Aorta (tissue), 5 donors: ENCODE measurements at regions of chr6 and their contacts with region 1.

Region 1: GRCh38 chr6:36893976-36894932 is 8.5 kb downstream of the C6orf89 start:
- DNase-seq: no peak
- ATAC-seq: no peak
- H3K4me3 ChIP-seq: no peak overlapping the region
- H3K27ac ChIP-seq: no peak overlapping the region
- H3K4me1 ChIP-seq: no peaks in the 10 kb centered on the region
- H3K27me3 ChIP-seq: no peaks in the 10 kb centered on the region

Region 2: DNA sequence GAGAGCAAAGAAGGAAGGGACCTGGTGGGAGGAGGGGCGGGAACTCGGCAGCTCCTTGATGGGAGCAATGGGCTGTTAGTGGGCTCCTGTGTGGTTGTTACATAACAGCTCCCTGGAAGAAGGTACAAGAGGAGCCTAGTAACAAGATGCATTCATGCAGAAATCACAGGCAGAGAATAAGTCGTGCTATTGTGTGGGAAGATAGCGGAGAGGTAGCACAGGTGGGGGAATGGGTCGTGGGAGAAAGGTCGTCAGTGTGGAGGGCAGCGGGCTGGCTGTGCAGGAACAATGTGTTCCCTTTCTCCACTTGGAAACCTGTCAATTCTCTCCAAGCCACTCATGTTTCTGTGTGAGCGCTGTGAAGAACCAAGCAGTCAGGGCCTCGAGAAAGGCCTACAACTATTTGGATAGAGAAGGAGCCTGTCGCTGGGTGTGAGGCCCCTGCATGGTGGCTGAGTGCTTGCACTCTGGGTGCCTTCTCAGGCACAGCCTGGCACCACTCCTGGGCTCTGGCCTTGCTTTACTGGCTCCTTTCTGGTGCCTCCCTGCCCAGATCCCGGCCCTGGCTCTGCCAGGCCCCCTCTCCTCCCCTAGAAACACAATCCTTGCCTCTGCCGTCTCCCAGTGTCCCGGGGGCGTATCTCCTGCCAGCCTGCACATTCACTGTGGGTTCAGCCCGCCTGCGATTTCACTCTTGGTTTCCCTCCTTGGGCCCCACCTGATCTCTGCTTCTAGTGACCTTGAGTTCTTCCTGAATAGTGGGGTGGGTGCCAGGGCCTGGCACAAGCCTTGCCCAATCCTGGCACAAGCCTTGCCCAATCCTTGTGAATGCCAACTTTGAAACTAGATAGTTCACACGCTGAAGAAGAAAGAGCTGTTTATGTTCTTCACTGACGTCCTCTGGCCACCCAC is 103.8 kb after region 1 on chr6:
- intact Hi-C with region 1: loop called in 1 of 2 experiments (anchors 5 kb)
- DNase-seq: peak in 1 of 2 donors; percentile 53
- ATAC-seq: peak; percentile 15
- H3K4me3 ChIP-seq: no peak overlapping the region
- H3K27ac ChIP-seq: peak overlapping the region in 1 of 2 donors; percentile 29
- H3K4me1 ChIP-seq: no peaks in the 10 kb centered on the region
- H3K27me3 ChIP-seq: no peaks in the 10 kb centered on the region